ENCODE measurements at regions of chr9 and their contacts with region 1.

Region 1: GRCh38 chr9:133144137-133144903 is 19.4 kb downstream of the GBGT1 start:
- DNase-seq: peak; percentile 82
- ATAC-seq: peak; percentile 50
- H3K4me3 Mint-ChIP-seq: peak overlapping the region; percentile 62
- H3K27ac Mint-ChIP-seq: no peak overlapping the region
- H3K4me1 Mint-ChIP-seq: peaks cover 24% of the 10 kb centered on the region
- H3K27me3 Mint-ChIP-seq: peaks cover 10% of the 10 kb centered on the region
- CTCF ChIP-seq: peak; percentile 98

Region 2: DNA sequence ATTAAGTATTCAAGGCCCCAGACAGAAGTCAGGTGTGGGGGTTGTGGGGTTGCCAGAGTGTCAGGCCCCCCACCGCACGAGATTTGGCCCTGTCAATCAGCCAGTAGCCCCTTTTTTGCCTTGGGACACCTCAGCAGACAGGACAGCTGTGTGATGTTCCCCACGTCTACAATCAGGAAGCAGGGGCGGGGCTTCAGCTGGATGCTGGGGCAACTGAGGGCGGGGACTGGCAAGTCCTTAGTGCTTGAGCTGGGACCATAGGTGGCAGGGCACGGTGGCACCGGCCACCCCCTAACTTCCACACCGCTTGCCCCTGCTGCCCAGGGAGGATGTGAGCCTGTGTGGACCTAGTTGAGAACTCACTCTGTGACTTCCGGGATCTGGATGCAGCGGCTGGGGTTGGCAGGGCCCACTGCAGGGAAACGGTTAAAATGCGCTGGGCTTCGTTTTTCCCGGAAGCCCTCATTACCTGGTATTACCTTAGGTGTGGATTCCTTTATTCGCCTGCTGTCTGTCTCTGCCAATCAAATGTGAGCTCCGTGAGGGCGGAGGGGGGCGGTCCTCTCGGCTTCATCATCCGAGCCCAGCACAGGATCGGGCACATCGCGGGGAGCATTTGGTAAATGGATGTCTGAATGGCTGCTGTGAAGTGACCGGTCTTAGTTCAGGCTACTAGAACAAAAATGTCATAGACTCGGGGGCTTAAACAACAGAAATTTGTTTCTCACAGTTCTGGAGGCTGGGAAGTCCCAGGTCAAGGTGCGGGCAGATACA is 121.0 kb before region 1 on chr9:
- CTCF ChIA-PET with region 1: interaction called, 28 read pairs
- POLR2A ChIA-PET with region 1: no interaction called
- DNase-seq: peak; percentile 47
- ATAC-seq: peak; percentile 18; the same call in 1 of the 2 replicates
- H3K4me3 Mint-ChIP-seq: no peak overlapping the region
- H3K27ac Mint-ChIP-seq: no peak overlapping the region
- H3K4me1 Mint-ChIP-seq: peaks cover 13% of the 10 kb centered on the region
- H3K27me3 Mint-ChIP-seq: peaks cover 27% of the 10 kb centered on the region
- CTCF ChIP-seq: no peak

Region 3: GRCh38 chr9:133035669-133036068 is 108.7 kb before region 1 on chr9:
- CTCF ChIA-PET with region 1: interaction called, 47 read pairs
- POLR2A ChIA-PET with region 1: interaction called, 5 read pairs
- DNase-seq: no peak
- ATAC-seq: no peak
- H3K4me3 Mint-ChIP-seq: no peak overlapping the region
- H3K27ac Mint-ChIP-seq: no peak overlapping the region
- H3K4me1 Mint-ChIP-seq: peaks cover 14% of the 10 kb centered on the region
- H3K27me3 Mint-ChIP-seq: no peaks in the 10 kb centered on the region
- CTCF ChIP-seq: no peak

Region 4: DNA sequence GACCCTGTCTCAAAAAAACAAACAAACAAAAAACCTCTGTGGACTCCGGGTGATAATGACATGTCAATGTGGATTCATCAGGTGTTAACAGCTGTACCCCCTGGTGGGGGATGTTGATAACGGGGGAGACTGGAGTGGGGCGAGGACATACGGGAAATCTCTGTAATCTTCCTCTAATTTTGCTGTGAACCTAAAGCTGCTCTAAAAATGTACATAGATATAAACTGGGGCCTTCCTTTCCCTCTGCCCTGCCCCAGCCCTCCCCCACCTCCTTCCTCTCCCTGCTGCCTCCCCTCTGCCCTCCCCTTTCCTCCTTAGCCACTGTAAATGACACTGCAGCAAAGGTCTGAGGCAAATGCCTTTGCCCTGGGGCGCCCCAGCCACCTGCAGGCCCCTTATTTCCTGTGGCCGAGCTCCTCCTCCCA is 83.9 kb before region 1 on chr9:
- CTCF ChIA-PET with region 1: interaction called, 13 read pairs
- POLR2A ChIA-PET with region 1: no interaction called
- DNase-seq: no peak
- ATAC-seq: peak; percentile 79
- H3K4me3 Mint-ChIP-seq: no peak overlapping the region; the same call in 1 of the 2 replicates
- H3K27ac Mint-ChIP-seq: peak overlapping the region; percentile 94
- H3K4me1 Mint-ChIP-seq: peaks cover 35% of the 10 kb centered on the region
- H3K27me3 Mint-ChIP-seq: no peaks in the 10 kb centered on the region
- CTCF ChIP-seq: no peak

Region 5: DNA sequence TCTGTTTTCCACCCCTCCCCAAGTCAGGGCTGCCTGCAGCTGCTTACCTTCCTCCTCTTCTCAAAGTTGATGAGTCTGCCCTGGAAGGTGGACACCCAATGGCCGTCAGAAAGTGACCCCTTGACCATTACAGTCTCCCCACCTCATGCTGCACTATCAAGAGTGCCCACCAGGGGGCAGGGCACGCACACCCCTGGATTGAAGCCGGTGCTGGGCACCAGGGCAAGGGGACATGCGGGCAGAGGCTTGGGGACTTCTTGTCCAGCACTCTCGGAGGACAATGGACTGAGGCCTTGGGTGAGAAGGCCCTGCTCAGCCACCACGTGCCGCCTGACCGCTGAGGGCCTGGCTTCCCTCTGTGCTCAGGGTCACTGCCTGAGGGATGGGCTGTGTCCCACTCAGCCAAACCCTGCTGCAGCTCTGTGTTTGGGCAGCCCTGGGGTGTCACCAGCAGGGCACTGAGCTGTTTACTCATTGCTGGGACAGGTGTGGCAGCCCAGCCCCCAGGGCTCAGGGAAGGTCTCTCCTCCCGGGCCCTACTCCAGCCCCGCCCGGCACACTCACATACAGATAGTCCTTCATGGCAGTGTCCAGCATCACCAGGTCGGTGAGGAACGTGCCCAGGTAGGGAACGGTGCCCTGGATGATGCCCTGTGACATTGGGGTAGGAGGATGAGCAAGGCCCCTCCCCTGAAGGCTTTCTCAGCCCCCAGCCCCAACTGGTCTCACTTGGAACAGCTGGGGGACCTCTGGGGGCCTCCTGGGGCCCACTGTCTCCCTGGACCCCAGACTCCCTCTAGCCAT is 40.9 kb before region 1 on chr9:
- CTCF ChIA-PET with region 1: interaction called, 93 read pairs
- POLR2A ChIA-PET with region 1: interaction called, 3 read pairs
- DNase-seq: peak; percentile 78
- ATAC-seq: peak; percentile 58
- H3K4me3 Mint-ChIP-seq: no peak overlapping the region
- H3K27ac Mint-ChIP-seq: no peak overlapping the region
- H3K4me1 Mint-ChIP-seq: peaks cover 3% of the 10 kb centered on the region
- H3K27me3 Mint-ChIP-seq: no peaks in the 10 kb centered on the region
- CTCF ChIP-seq: peak; percentile 99

Region 6: DNA sequence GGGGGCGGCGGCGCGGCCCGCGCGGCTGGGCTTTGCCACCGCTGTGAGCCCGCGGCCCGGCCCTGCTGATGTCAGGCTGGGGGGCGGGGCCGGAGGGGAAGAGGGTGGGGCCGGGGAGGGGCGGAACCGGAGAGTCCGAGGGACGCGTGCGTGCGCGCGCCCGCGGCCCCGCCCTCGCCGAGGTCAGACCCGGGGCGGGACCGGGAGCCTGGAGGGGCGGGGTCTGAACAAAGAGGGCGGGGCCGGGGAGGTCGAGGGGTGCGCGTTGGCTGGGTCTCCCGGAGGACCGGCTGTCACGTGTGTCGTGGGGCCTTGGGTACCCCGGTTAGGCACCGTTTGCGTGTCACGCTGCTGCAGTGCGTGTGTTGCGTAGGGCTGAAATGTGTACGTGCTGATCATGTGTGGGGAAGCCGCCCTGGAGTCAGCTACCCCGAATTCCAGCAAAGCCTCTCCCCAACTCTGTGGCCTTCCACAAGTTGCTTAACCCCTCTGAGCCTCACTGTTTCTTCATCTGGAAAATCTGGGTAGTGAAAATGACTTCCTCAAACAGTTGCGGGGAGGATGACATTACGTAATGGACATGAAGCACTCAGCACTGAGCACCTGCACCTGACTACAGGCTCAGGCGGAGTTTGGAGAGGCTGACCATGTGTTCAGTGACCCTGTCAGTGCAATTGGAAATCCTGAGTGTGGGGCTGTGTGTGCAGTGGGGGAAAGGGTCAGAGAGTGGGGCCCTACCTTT is 23.0 kb before region 1 on chr9 and contains the start of gene RALGDS:
- CTCF ChIA-PET with region 1: interaction called, 70 read pairs
- POLR2A ChIA-PET with region 1: interaction called, 3 read pairs
- DNase-seq: peak; percentile 87
- ATAC-seq: peak; percentile 80
- H3K4me3 Mint-ChIP-seq: peak within 1 kb of the TSS; percentile 75
- H3K27ac Mint-ChIP-seq: no peak within 1 kb of the TSS
- H3K4me1 Mint-ChIP-seq: peaks cover 12% of the 10 kb centered on the region
- H3K27me3 Mint-ChIP-seq: peaks cover 58% of the 10 kb centered on the region
- CTCF ChIP-seq: no peak
- total RNA-seq, gene RALGDS: 19.5 to 23.2 TPM (median 22.9 TPM) in 3 replicates

Region 7: DNA sequence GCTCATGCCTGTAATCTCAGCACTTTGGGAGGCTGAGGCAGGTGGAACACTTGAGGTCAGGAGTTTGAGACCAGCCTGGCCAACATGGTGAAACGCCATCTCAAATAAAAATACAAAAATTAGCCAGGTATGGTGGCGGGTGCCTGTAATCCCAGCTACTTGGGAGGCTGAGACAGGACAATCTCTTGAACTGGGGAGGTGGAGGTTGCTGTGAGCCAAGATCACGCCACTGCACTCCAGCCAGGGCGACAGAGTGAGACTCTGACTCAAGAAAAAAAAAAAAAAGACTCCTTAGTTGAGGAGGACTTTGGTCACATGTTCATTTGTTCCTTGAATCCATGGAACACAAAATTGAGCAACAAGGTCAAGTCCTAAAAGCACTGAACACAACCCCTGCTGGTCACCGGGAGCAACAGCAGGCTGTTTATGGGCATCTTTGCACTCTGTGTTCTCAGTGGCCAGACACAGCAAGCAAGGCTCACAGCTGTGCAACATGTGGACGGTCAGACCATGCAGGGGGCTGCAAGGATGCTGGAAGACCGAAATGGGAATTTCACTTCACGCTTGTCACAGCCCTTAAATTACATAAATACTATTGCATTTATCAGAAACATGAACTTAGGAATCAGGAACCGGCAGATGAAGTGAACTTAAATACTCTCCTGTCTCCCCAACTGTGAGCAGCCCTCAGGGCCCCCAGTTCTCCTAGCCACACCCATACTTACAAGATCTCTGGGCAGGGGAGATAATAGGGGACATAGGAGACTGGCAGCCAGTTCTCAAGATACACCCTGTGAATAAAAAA is 16.6 kb after region 1 on chr9:
- CTCF ChIA-PET with region 1: interaction called, 16 read pairs
- POLR2A ChIA-PET with region 1: interaction called, 3 read pairs
- DNase-seq: peak; percentile 51
- ATAC-seq: peak; percentile 41
- H3K4me3 Mint-ChIP-seq: no peak overlapping the region
- H3K27ac Mint-ChIP-seq: no peak overlapping the region
- H3K4me1 Mint-ChIP-seq: peaks cover 6% of the 10 kb centered on the region
- H3K27me3 Mint-ChIP-seq: peaks cover 6% of the 10 kb centered on the region
- CTCF ChIP-seq: peak; percentile 74

Region 8: DNA sequence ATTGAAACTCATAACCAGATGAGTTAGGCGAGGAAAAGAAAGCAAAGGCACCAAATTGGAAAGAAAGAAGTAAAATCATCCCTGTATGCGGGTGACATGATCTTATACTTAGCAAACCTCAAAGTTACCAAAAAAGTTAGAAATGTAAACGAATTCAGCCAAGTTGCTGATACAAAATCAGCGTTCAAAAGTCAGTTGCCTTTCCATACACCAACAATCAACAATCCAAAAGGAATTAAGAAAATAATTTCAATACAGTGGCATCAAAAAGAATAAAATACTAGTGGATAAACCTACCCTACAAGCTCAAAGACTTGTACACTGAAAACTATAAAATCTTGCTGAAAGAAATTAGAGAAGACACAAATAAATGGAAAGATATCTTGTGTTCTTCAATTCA is 50.3 kb after region 1 on chr9:
- CTCF ChIA-PET with region 1: no interaction called
- POLR2A ChIA-PET with region 1: no interaction called
- DNase-seq: no peak
- ATAC-seq: no peak
- H3K4me3 Mint-ChIP-seq: no peak overlapping the region
- H3K27ac Mint-ChIP-seq: no peak overlapping the region
- H3K4me1 Mint-ChIP-seq: no peaks in the 10 kb centered on the region; the same call in 1 of the 2 replicates
- H3K27me3 Mint-ChIP-seq: peaks cover 40% of the 10 kb centered on the region
- CTCF ChIP-seq: no peak

Measured in WTC11 (cell line).